B cell (primary cell): ENCODE measurements at regions of chr5 and their contacts with region 1.

Region 1: DNA sequence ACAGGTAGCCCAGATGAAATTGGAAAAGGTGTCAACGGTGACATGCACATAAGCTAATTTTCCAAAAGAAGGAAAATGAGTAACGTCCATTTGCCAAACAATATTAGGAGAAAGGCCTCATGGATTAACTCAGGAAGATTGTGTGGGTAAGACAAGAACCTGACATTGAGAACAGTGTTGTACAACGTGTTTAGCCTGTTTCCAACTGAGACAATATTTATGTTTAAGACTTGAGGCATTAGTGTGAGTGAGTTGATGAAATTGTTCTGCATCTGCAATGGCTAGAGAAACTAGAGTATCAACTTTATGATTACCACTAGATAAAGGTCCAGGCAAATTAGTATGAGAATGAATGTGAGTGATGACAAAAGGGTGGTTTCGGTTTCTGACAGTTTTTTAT is 191.3 kb upstream of the RAI14 start:
- DNase-seq: no peak
- ATAC-seq: no peak
- H3K4me3 ChIP-seq: no peak overlapping the region
- H3K4me3 Mint-ChIP-seq: no peak overlapping the region
- H3K27ac ChIP-seq: no peak overlapping the region
- H3K27ac Mint-ChIP-seq: no peak overlapping the region
- H3K4me1 ChIP-seq: no peaks in the 10 kb centered on the region
- H3K4me1 Mint-ChIP-seq: peaks cover 2% of the 10 kb centered on the region
- H3K27me3 ChIP-seq: no peaks in the 10 kb centered on the region
- H3K27me3 Mint-ChIP-seq: peaks cover 22% of the 10 kb centered on the region
- CTCF ChIP-seq: no peak

Region 2: GRCh38 chr5:33997331-33997983 is 467.4 kb before region 1 on chr5:
- CTCF ChIA-PET with region 1: interaction called, 29 read pairs
- POLR2A ChIA-PET with region 1: no interaction called
- intact Hi-C with region 1: no loop called
- DNase-seq: peak; percentile 39
- ATAC-seq: peak; percentile 49
- H3K4me3 ChIP-seq: no peak overlapping the region
- H3K4me3 Mint-ChIP-seq: no peak overlapping the region
- H3K27ac ChIP-seq: no peak overlapping the region
- H3K27ac Mint-ChIP-seq: no peak overlapping the region
- H3K4me1 ChIP-seq: no peaks in the 10 kb centered on the region
- H3K4me1 Mint-ChIP-seq: no peaks in the 10 kb centered on the region
- H3K27me3 ChIP-seq: no peaks in the 10 kb centered on the region
- H3K27me3 Mint-ChIP-seq: no peaks in the 10 kb centered on the region
- CTCF ChIP-seq: peak; percentile 56

Region 3: DNA sequence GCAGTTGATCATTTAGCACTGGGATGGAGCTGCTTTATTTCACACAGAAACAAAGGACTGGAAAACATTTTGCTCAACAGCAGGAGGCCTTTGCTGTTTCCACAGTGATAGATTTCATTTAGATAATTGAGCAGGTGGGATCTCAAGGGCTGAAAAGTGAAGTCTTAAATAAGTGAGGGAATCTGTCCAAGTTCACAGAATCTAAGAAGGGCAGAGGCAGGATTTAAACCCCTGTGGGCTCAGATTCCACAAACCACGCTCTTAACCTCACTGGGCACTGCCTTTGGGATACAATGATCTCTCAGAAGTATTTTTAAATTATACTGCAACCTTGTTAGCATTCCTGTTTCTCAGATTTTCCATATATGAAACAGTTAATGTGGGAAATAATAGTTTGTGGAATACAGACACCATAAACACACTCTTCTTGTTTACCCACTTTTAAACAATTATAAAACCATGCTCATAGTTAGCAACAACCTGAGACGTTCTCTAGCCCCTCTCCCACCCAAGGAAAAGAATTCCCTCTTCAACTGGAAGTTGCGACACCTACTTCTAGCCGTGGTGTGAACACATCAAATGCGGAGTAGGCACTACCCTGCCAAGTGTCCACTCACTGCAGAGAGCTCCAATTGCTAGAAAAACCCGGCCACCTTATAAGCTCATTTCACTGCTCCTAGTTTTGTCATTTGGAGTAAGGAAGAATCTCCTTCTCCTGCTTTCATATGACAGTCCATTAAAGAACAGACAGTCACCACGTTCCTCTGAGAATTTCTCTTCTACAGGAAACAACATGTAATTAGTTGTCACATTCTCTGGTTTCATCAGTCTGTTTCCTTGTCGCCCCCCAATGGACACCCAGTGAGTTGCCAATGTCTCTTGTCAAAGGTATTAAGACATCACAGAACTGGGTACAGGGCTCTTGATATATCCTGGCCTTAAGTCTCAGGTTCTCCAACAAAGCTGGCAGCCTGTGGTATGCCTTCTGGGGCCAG is 718.0 kb after region 1 on chr5:
- CTCF ChIA-PET with region 1: no interaction called
- POLR2A ChIA-PET with region 1: no interaction called
- intact Hi-C with region 1: no loop called
- DNase-seq: no peak
- ATAC-seq: peak; percentile 45
- H3K4me3 ChIP-seq: no peak overlapping the region
- H3K4me3 Mint-ChIP-seq: no peak overlapping the region
- H3K27ac ChIP-seq: no peak overlapping the region
- H3K27ac Mint-ChIP-seq: no peak overlapping the region
- H3K4me1 ChIP-seq: no peaks in the 10 kb centered on the region
- H3K4me1 Mint-ChIP-seq: no peaks in the 10 kb centered on the region
- H3K27me3 ChIP-seq: no peaks in the 10 kb centered on the region
- H3K27me3 Mint-ChIP-seq: peaks cover 4% of the 10 kb centered on the region
- CTCF ChIP-seq: no peak